ENCODE measurements at regions of chr11 and their contacts with region 1.

Region 1: GRCh38 chr11:130580372-130580771 is 131.9 kb downstream of the ADAMTS15 start:
- DNase-seq: peak; percentile 54
- H3K4me3 Mint-ChIP-seq: no peak overlapping the region
- H3K27ac Mint-ChIP-seq: peak overlapping the region; percentile 12
- H3K4me1 Mint-ChIP-seq: peaks cover 25% of the 10 kb centered on the region
- H3K27me3 Mint-ChIP-seq: no peaks in the 10 kb centered on the region
- CTCF ChIP-seq: no peak

Region 2: DNA sequence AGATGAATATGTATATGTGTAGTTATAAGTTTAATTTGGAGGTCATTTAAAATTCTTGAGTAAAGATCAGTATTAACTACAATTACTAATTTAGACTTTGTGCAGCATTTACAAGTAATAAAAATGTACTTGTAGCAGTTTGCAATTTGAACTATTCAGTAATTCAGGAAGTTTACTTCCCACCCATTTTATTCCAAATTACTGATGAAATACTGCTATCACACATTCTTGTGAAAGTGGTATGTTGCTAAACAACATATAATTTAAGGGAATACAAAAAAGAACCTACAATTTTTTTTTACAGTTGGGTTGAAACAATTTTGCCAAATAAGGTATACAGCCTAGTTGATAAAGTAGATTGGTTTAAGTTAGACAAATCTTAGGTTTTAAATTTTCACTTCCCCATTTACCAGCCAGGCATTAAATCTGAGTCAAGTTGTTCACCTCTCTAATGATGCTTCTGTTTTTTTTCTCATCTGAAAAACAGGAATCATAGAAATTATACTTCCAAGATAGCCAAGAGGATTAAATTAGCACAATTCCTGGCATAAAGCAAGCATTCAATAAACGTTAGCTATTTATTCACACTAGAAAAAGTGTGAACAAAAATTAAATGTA is 310.9 kb before region 1 on chr11:
- CTCF ChIA-PET with region 1: no interaction called
- intact Hi-C with region 1: no loop called
- DNase-seq: no peak
- H3K4me3 Mint-ChIP-seq: no peak overlapping the region
- H3K27ac Mint-ChIP-seq: no peak overlapping the region
- H3K4me1 Mint-ChIP-seq: no peaks in the 10 kb centered on the region
- H3K27me3 Mint-ChIP-seq: no peaks in the 10 kb centered on the region
- CTCF ChIP-seq: no peak

Region 3: GRCh38 chr11:130487924-130488815 is 92.2 kb before region 1 on chr11:
- CTCF ChIA-PET with region 1: no interaction called
- intact Hi-C with region 1: no loop called
- DNase-seq: no peak
- H3K4me3 Mint-ChIP-seq: no peak overlapping the region
- H3K27ac Mint-ChIP-seq: no peak overlapping the region
- H3K4me1 Mint-ChIP-seq: no peaks in the 10 kb centered on the region
- H3K27me3 Mint-ChIP-seq: no peaks in the 10 kb centered on the region
- CTCF ChIP-seq: no peak

Region 4: GRCh38 chr11:130636722-130637517 is 56.5 kb after region 1 on chr11:
- CTCF ChIA-PET with region 1: no interaction called
- intact Hi-C with region 1: loop called (anchors 5 kb)
- DNase-seq: peak; percentile 13
- H3K4me3 Mint-ChIP-seq: peak overlapping the region; percentile 9
- H3K27ac Mint-ChIP-seq: peak overlapping the region; percentile 55
- H3K4me1 Mint-ChIP-seq: peaks cover 19% of the 10 kb centered on the region
- H3K27me3 Mint-ChIP-seq: no peaks in the 10 kb centered on the region
- CTCF ChIP-seq: no peak

Region 5: GRCh38 chr11:130827451-130828377 is 247.3 kb after region 1 on chr11:
- CTCF ChIA-PET with region 1: interaction called, 3 read pairs
- intact Hi-C with region 1: loop called (anchors 5 kb)
- DNase-seq: peak; percentile 65
- H3K4me3 Mint-ChIP-seq: no peak overlapping the region
- H3K27ac Mint-ChIP-seq: no peak overlapping the region
- H3K4me1 Mint-ChIP-seq: no peaks in the 10 kb centered on the region
- H3K27me3 Mint-ChIP-seq: no peaks in the 10 kb centered on the region
- CTCF ChIP-seq: peak; percentile 29